Esophagus muscularis mucosa (tissue), 4 donors: ENCODE measurements at regions of chr17 and their contacts with region 1.

Region 1: GRCh38 chr17:2406903-2407790 is 6.3 kb upstream of the MNT start:
- DNase-seq: no peak
- H3K4me3 ChIP-seq: peak overlapping the region in 3 of 4 donors; percentile 0 to 9 (median 2)
- H3K27ac ChIP-seq: peak overlapping the region; percentile 98 to 100 (median 100)
- H3K4me1 ChIP-seq: peaks cover 51 to 57% (median 56%) of the 10 kb centered on the region in 4 donors
- H3K27me3 ChIP-seq: no peaks in the 10 kb centered on the region
- CTCF ChIP-seq: no peak
- EP300 ChIP-seq: no peak
- POLR2A ChIP-seq: no peak

Region 2: DNA sequence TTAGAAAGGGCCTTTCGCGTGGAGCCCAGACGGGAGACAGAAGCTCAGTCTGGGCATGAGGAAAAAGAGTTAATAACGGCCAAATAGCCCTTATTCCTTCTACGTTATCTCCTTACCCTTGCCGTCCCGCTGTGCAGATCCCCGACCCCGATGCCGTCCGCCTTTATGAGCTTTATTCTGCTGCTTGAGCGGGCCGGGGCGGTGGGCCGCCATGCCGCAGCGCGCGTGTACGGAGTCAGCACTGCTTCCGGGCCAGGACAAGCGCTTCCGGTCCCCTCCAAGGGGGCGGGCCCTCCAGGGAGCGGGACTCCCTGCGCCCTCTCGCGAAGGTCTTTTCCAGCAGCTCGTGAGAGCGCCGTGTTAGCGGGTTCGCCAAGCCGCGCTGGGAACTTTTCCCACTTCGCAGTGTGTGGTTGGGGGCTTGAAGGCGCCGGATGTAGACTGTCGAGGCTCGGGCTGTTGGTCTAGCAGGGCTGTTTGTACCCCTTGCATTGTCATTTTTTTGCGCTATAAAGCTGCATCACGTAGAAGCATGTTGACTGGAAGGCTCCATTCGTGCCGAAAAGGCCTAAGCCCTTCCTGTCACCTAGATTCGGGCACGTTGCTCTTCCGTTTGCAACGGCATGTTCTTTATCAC is 70.8 kb before region 1 on chr17 and contains the start of gene TSR1:
- intact Hi-C with region 1: loop called (anchors 5 kb)
- DNase-seq: no peak
- H3K4me3 ChIP-seq: peak within 1 kb of the TSS; percentile 83 to 99 (median 97)
- H3K27ac ChIP-seq: peak within 1 kb of the TSS; percentile 89 to 95 (median 94)
- H3K4me1 ChIP-seq: peaks cover 14 to 36% (median 32%) of the 10 kb centered on the region in 4 donors
- H3K27me3 ChIP-seq: no peaks in the 10 kb centered on the region
- CTCF ChIP-seq: peak in 2 of 3 experiments; percentile 26 to 41
- EP300 ChIP-seq: no peak
- POLR2A ChIP-seq: peak; percentile 57
- total RNA-seq, gene TSR1: 49.0 to 57.2 (median 55.1) TPM

Region 3: GRCh38 chr17:2580661-2581060 is 173.5 kb after region 1 on chr17:
- intact Hi-C with region 1: no loop called
- DNase-seq: no peak
- H3K4me3 ChIP-seq: no peak overlapping the region
- H3K27ac ChIP-seq: no peak overlapping the region
- H3K4me1 ChIP-seq: no peaks in the 10 kb centered on the region
- H3K27me3 ChIP-seq: peaks cover 0 to 4% (median 0%) of the 10 kb centered on the region in 4 donors
- CTCF ChIP-seq: no peak
- EP300 ChIP-seq: no peak
- POLR2A ChIP-seq: no peak

Region 4: DNA sequence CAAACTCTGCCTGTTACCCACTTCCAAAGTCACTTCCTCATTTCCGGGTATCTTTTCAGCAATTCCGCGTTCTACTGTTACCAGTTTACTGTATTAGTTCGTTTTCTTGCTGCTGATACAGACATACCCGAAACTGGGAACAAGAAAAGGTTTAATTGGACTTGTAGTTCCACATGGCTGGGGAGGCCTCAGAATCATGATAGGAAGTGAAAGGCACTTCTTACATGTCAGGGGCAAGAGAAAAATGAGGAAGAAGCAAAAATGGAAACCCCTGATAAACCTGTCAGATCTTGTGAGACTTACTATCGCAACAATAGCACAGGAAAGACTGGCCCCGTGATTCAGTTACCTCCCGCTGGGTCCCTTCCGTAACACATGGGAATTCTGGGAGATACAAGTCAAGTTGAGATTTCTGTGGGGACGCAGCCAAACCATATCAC is 217.2 kb after region 1 on chr17:
- intact Hi-C with region 1: no loop called
- DNase-seq: no peak
- H3K4me3 ChIP-seq: no peak overlapping the region
- H3K27ac ChIP-seq: no peak overlapping the region
- H3K4me1 ChIP-seq: peaks cover 17 to 66% (median 54%) of the 10 kb centered on the region in 4 donors
- H3K27me3 ChIP-seq: no peaks in the 10 kb centered on the region
- CTCF ChIP-seq: no peak
- EP300 ChIP-seq: no peak
- POLR2A ChIP-seq: no peak

Region 5: GRCh38 chr17:2634361-2634960 is 227.3 kb after region 1 on chr17:
- intact Hi-C with region 1: no loop called
- DNase-seq: no peak
- H3K4me3 ChIP-seq: no peak overlapping the region
- H3K27ac ChIP-seq: peak overlapping the region in 1 of 4 donors; percentile 18
- H3K4me1 ChIP-seq: peaks cover 31 to 70% (median 65%) of the 10 kb centered on the region in 4 donors
- H3K27me3 ChIP-seq: no peaks in the 10 kb centered on the region
- CTCF ChIP-seq: no peak
- EP300 ChIP-seq: no peak
- POLR2A ChIP-seq: no peak